ENCODE measurements at regions of chr7 and their contacts with region 1.

Region 1: GRCh38 chr7:2863461-2864066 is 19.5 kb upstream of the GNA12 start:
- H3K4me3 ChIP-seq: no peak overlapping the region
- H3K27ac ChIP-seq: peak overlapping the region; percentile 46; the same call in 1 of the 2 replicates
- H3K4me1 ChIP-seq: no peaks in the 10 kb centered on the region
- CTCF ChIP-seq: no peak

Region 2: DNA sequence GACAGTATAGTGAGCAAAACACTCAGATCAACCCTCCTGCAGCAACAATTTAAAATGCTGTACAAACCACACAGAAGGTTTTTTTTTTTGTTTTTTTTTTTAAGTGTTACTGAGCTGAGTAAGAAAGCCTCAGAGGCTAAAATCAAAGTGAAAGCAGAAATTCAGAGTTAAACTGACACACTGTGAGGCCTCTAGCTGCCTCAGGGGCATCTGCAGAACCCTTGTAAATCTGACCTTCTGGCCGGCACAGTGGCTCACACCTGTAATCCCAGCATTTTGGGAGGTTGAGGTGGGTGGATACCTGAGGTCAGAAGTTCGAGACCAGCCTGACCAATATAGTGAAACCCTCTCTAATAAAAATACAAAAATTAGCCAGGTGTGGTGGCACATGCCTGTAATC is 12.1 kb before region 1 on chr7:
- CTCF ChIA-PET with region 1: interaction called, 11 read pairs
- POLR2A ChIA-PET with region 1: no interaction called
- H3K4me3 ChIP-seq: no peak overlapping the region
- H3K27ac ChIP-seq: no peak overlapping the region
- H3K4me1 ChIP-seq: no peaks in the 10 kb centered on the region
- CTCF ChIP-seq: no peak

Region 3: DNA sequence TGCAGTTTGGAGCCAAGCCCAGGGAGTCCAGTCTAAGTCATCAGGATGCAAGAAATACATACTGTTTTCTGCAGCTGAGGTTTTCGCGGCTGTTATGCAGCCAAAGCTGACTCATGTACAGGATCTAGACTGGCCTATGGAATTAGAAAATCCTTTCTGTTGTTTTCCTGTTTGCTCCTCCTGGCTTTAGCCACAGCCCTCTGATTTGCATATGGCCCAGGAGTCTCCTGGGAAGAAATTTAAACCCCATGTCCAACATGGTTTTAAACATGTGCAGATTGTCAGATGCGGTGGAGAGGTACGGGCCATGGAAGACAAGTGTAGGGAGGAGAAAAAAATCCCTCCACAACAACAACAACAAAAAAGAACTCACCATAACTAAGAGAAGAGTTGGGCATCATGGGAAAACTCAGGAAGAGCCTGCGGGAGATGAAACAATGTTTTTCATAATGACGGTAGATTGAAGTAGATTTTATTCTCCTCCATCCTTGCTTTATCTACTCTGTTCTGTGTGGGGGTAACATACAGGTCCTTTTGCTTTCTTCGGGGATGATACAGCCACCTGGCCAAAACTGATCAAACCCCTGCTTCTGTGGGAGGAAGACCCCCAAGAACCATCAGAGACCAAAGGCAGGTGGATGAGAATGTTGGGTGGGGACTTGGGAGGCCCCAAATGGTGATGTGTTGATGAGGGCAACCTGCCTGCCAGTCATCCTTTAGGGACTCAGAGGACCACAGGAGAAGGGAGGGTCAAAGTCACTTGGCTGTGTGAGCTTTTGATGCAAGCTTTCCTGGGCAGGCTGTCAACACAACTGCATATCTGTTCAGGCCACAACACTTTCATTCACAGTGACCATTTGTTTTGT is 10.4 kb after region 1 on chr7:
- CTCF ChIA-PET with region 1: interaction called, 12 read pairs
- POLR2A ChIA-PET with region 1: interaction called, 4 read pairs
- H3K4me3 ChIP-seq: no peak overlapping the region
- H3K27ac ChIP-seq: no peak overlapping the region
- H3K4me1 ChIP-seq: no peaks in the 10 kb centered on the region
- CTCF ChIP-seq: no peak

Region 4: GRCh38 chr7:2921653-2922347 is 58.2 kb after region 1 on chr7:
- CTCF ChIA-PET with region 1: interaction called, 12 read pairs
- POLR2A ChIA-PET with region 1: no interaction called
- H3K4me3 ChIP-seq: no peak overlapping the region
- H3K27ac ChIP-seq: no peak overlapping the region
- H3K4me1 ChIP-seq: no peaks in the 10 kb centered on the region
- CTCF ChIP-seq: no peak

Region 5: DNA sequence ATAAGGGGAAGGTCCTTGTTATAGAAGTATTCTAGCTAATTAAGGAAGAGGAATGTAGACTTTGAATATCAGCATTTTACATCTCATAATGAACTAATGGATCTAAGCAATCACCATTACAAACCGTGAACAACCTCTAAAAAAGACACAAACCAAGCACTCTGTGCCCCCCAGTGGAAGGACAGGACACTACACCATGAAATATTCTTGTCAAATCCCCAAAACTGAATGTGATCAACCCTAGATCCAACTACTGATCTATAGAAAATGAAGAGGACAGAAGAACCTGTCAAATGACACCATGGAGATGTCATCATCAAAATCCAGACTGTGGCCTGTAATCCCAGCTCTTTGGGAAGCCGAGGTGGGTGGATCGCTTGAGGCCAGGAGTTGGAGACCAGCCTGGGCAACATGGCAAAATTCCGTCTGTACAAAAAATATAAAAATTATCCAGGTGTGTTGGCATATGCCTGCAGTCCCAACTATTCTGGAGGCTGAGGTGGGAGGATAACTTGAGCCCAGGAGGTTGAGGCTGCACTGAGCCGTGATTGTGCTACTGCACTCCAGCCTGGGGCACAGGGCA is 291.4 kb after region 1 on chr7:
- CTCF ChIA-PET with region 1: interaction called, 12 read pairs
- POLR2A ChIA-PET with region 1: no interaction called
- H3K4me3 ChIP-seq: no peak overlapping the region
- H3K27ac ChIP-seq: no peak overlapping the region
- H3K4me1 ChIP-seq: no peaks in the 10 kb centered on the region; the same call in 1 of the 2 replicates
- CTCF ChIP-seq: peak; percentile 41; the same call in 1 of the 2 replicates